T-cell (primary cell): ENCODE measurements at regions of chr2 and their contacts with region 1.

Region 1: GRCh38 chr2:96856776-96857673 is 791 bp downstream of the ANKRD39 start:
- DNase-seq: peak in 6 of 35 experiments; percentile 10 to 52 (median 26)
- ATAC-seq: peak in 3 of 4 experiments; percentile 20 to 23 (median 22)
- H3K4me3 ChIP-seq: peak overlapping the region; percentile 62 to 95
- H3K4me3 Mint-ChIP-seq: peak overlapping the region; percentile 80 to 87 (median 81)
- H3K27ac ChIP-seq: peak overlapping the region; percentile 64
- H3K27ac Mint-ChIP-seq: peak overlapping the region; percentile 76 to 77
- H3K4me1 ChIP-seq: peaks cover 15 to 48% of the 10 kb centered on the region in 2 experiments
- H3K4me1 Mint-ChIP-seq: peaks cover 39 to 47% (median 45%) of the 10 kb centered on the region in 3 donors
- H3K27me3 ChIP-seq: no peaks in the 10 kb centered on the region
- H3K27me3 Mint-ChIP-seq: no peaks in the 10 kb centered on the region

Region 2: DNA sequence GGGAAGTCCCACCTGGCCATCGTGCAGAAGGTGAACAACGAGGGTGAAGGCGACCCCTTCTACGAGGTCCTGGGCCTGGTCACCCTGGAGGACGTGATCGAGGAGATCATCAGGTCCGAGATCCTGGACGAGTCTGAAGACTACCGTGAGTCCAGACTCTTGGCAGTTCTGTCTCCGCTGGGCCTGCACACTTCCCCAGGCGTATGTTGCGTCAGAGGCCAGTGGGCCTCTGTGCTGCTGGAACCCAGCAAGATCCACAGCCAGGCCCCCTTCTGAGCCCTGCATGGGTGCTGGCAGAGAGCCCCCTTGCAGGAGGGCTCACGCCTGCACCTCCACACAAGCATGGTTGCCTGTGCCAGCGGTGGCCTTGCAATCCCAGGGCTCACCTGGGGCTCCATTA is 32.0 kb before region 1 on chr2:
- CTCF ChIA-PET with region 1: no interaction called
- POLR2A ChIA-PET with region 1: no interaction called
- DNase-seq: no peak
- ATAC-seq: no peak
- H3K4me3 ChIP-seq: no peak overlapping the region
- H3K4me3 Mint-ChIP-seq: no peak overlapping the region
- H3K27ac ChIP-seq: no peak overlapping the region
- H3K27ac Mint-ChIP-seq: peak overlapping the region in 1 of 2 donors; percentile 11
- H3K4me1 ChIP-seq: peaks cover 0 to 28% of the 10 kb centered on the region in 2 experiments
- H3K4me1 Mint-ChIP-seq: peaks cover 17 to 34% (median 31%) of the 10 kb centered on the region in 3 donors
- H3K27me3 ChIP-seq: no peaks in the 10 kb centered on the region
- H3K27me3 Mint-ChIP-seq: no peaks in the 10 kb centered on the region

Region 3: GRCh38 chr2:96869822-96870625 is 13.0 kb after region 1 on chr2 and contains the start of gene SEMA4C:
- CTCF ChIA-PET with region 1: interaction called in 1 of 2 experiments, 25 read pairs
- POLR2A ChIA-PET with region 1: interaction called in 1 of 2 experiments, 3 read pairs
- DNase-seq: peak in 32 of 35 experiments; percentile 32 to 78 (median 54)
- ATAC-seq: peak; percentile 57 to 67 (median 64)
- H3K4me3 ChIP-seq: peak within 1 kb of the TSS; percentile 66 to 75
- H3K4me3 Mint-ChIP-seq: peak within 1 kb of the TSS; percentile 84 to 90 (median 86)
- H3K27ac ChIP-seq: peak within 1 kb of the TSS; percentile 89
- H3K27ac Mint-ChIP-seq: peak within 1 kb of the TSS; percentile 92 to 93
- H3K4me1 ChIP-seq: peaks cover 16 to 56% of the 10 kb centered on the region in 2 experiments
- H3K4me1 Mint-ChIP-seq: peaks cover 40 to 60% (median 52%) of the 10 kb centered on the region in 3 donors
- H3K27me3 ChIP-seq: peaks cover 0 to 6% of the 10 kb centered on the region in 2 experiments
- H3K27me3 Mint-ChIP-seq: no peaks in the 10 kb centered on the region
- total RNA-seq, gene SEMA4C: 36.3 to 89.0 (median 72.3) TPM

Region 4: GRCh38 chr2:96951093-96951654 is 94.1 kb after region 1 on chr2:
- CTCF ChIA-PET with region 1: interaction called, 7 to 49 read pairs
- POLR2A ChIA-PET with region 1: no interaction called
- DNase-seq: peak; percentile 52 to 87 (median 73)
- ATAC-seq: peak; percentile 95 to 97 (median 97)
- H3K4me3 ChIP-seq: no peak overlapping the region
- H3K4me3 Mint-ChIP-seq: no peak overlapping the region
- H3K27ac ChIP-seq: no peak overlapping the region
- H3K27ac Mint-ChIP-seq: no peak overlapping the region
- H3K4me1 ChIP-seq: peaks cover 0 to 33% of the 10 kb centered on the region in 2 experiments
- H3K4me1 Mint-ChIP-seq: peaks cover 21 to 26% (median 25%) of the 10 kb centered on the region in 3 donors
- H3K27me3 ChIP-seq: peaks cover 0 to 13% of the 10 kb centered on the region in 2 experiments
- H3K27me3 Mint-ChIP-seq: no peaks in the 10 kb centered on the region

Region 5: GRCh38 chr2:96960153-96960961 is 103.3 kb after region 1 on chr2:
- CTCF ChIA-PET with region 1: interaction called, 7 to 47 read pairs
- POLR2A ChIA-PET with region 1: interaction called, 3 to 9 read pairs
- DNase-seq: peak; percentile 49 to 91 (median 79)
- ATAC-seq: peak in 3 of 4 experiments; percentile 23 to 36 (median 31)
- H3K4me3 ChIP-seq: no peak overlapping the region
- H3K4me3 Mint-ChIP-seq: peak overlapping the region in 1 of 3 donors; percentile 76
- H3K27ac ChIP-seq: no peak overlapping the region
- H3K27ac Mint-ChIP-seq: peak overlapping the region; percentile 68 to 70
- H3K4me1 ChIP-seq: peaks cover 41 to 54% of the 10 kb centered on the region in 2 experiments
- H3K4me1 Mint-ChIP-seq: peaks cover 52 to 57% (median 54%) of the 10 kb centered on the region in 3 donors
- H3K27me3 ChIP-seq: no peaks in the 10 kb centered on the region
- H3K27me3 Mint-ChIP-seq: no peaks in the 10 kb centered on the region